PC-9 (cell line): ENCODE measurements at regions of chr5 and their contacts with region 1.

Region 1: GRCh38 chr5:144191998-144192397 is 21.3 kb downstream of the KCTD16 start:
- DNase-seq: peak in 1 of 2 experiments; percentile 56
- H3K4me3 ChIP-seq: peak overlapping the region; percentile 21; the same call in 1 of the 2 replicates
- H3K27ac ChIP-seq: no peak overlapping the region
- H3K4me1 ChIP-seq: peaks cover 20% of the 10 kb centered on the region
- H3K27me3 ChIP-seq: no peaks in the 10 kb centered on the region
- CTCF ChIP-seq: peak; percentile 49; the same call in 1 of the 2 replicates

Region 2: GRCh38 chr5:146173597-146173996 is 1981.6 kb after region 1 on chr5:
- CTCF ChIA-PET with region 1: no interaction called
- POLR2A ChIA-PET with region 1: interaction called, 11 read pairs
- intact Hi-C with region 1: no loop called
- DNase-seq: no peak
- H3K4me3 ChIP-seq: no peak overlapping the region
- H3K27ac ChIP-seq: no peak overlapping the region
- H3K4me1 ChIP-seq: no peaks in the 10 kb centered on the region
- H3K27me3 ChIP-seq: no peaks in the 10 kb centered on the region
- CTCF ChIP-seq: no peak